ENCODE measurements at regions of chr11 and their contacts with region 1.

Region 1: DNA sequence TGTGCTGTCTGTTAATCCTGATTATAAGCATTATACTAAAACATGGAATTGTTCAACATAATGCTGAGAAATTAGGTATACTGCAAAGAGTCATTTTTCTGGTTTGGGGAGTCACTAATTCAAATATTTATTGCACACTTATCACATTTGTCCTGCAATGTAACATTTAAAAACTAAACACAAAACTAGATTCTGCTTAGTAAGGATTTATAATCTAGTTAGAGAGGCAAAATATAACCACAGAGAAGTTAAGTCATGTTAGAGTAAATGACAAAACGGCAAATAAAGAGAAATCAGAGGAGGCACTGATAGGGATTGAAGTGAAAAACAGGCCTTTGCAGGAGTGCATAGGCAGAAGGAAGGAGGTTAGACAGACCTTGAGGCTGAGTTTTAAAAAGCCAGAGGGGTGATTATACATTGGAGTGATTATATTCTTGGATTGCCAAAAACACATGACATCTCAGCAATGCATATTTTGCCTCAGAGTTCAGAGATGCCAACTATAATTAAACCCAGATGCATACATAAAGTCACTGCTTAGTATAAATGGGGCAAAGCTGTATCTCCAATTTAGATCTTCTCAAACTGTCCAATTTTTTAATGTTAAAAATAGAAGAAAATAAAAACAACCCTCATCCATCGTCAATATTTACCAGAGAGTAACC is 49.7 kb downstream of the CCDC34 start:
- DNase-seq: no peak
- H3K4me3 ChIP-seq: no peak overlapping the region
- H3K4me3 Mint-ChIP-seq: no peak overlapping the region
- H3K27ac ChIP-seq: no peak overlapping the region
- H3K27ac Mint-ChIP-seq: no peak overlapping the region
- H3K4me1 ChIP-seq: no peaks in the 10 kb centered on the region
- H3K4me1 Mint-ChIP-seq: no peaks in the 10 kb centered on the region
- H3K27me3 ChIP-seq: no peaks in the 10 kb centered on the region
- H3K27me3 Mint-ChIP-seq: peaks cover 0 to 2% of the 10 kb centered on the region in 2 donors

Region 2: DNA sequence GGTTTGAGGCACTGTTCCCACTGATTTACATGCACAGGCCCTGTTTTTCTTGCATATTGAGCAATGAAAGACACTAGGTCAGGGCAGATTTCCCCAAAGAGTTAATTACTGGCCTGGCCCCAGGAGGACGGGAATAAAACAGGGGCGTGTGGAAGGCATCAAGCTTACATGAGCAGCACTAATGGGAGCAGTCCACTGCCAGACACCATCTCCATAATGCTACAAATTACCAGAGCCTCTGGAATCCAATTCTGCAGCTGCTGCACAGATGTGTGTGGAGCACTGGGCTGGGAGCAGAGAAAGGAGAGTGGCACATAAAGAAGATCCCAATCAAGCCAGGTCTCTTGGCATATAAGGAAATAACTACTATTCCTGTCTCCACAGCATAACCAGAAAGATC is 47.2 kb before region 1 on chr11:
- CTCF ChIA-PET with region 1: no interaction called
- POLR2A ChIA-PET with region 1: no interaction called
- intact Hi-C with region 1: loop called (anchors 1 kb)
- DNase-seq: no peak
- H3K4me3 ChIP-seq: no peak overlapping the region
- H3K4me3 Mint-ChIP-seq: no peak overlapping the region
- H3K27ac ChIP-seq: no peak overlapping the region
- H3K27ac Mint-ChIP-seq: no peak overlapping the region
- H3K4me1 ChIP-seq: no peaks in the 10 kb centered on the region
- H3K4me1 Mint-ChIP-seq: no peaks in the 10 kb centered on the region
- H3K27me3 ChIP-seq: no peaks in the 10 kb centered on the region
- H3K27me3 Mint-ChIP-seq: peaks cover 0 to 3% of the 10 kb centered on the region in 2 donors